Heart left ventricle (tissue), 16 donors: ENCODE measurements at regions of chr18 and their contacts with region 1.

Region 1: GRCh38 chr18:49561289-49562193 is at the start of gene LIPG:
- DNase-seq: peak in 4 of 5 donors; percentile 10 to 69 (median 36)
- ATAC-seq: peak in 3 of 4 donors; percentile 35 to 72 (median 45)
- H3K4me3 ChIP-seq: peak within 1 kb of the TSS; percentile 11 to 55 (median 40)
- H3K27ac ChIP-seq: no peak within 1 kb of the TSS
- H3K4me1 ChIP-seq: peaks cover 3 to 35% (median 21%) of the 10 kb centered on the region in 12 donors
- H3K27me3 ChIP-seq: peaks cover 12 to 53% (median 38%) of the 10 kb centered on the region in 9 donors
- CTCF ChIP-seq: no peak
- POLR2A ChIP-seq: no peak
- total RNA-seq, gene LIPG: 0.20 to 12.1 (median 1.1) TPM in 6 of 9 donors, not detected in the others

Region 2: GRCh38 chr18:49628881-49629795 is 67.6 kb after region 1 on chr18:
- intact Hi-C with region 1: loop called in 1 of 10 experiments (anchors 10 kb)
- DNase-seq: peak in 3 of 5 donors; percentile 42 to 76 (median 45)
- ATAC-seq: peak in 2 of 4 donors; percentile 47 to 68
- H3K4me3 ChIP-seq: no peak overlapping the region
- H3K27ac ChIP-seq: no peak overlapping the region
- H3K4me1 ChIP-seq: peaks cover 0 to 5% (median 0%) of the 10 kb centered on the region in 12 donors
- H3K27me3 ChIP-seq: peaks cover 0 to 22% (median 0%) of the 10 kb centered on the region in 9 donors
- CTCF ChIP-seq: peak in 5 of 12 donors; percentile 8 to 30 (median 15)
- POLR2A ChIP-seq: no peak

Region 3: DNA sequence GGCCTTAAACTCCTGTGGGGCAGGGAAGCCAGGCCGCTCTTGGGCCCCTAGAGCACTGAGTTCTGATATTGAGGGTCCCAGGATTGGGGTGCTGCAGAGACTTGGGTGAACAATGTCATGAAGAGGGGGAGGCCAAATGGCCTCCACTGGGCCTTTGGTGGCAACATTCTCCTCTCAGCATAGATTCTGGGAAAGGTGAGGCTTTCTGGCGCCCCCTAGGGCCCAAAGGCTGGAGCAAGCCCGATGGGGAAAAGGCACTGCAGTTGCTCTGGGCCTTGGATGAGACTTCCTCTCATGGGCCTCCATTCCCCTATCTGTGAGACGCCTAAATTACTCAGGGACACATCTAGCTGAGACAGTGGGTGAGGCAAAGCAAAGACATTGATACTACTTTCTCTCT is 167.0 kb after region 1 on chr18:
- intact Hi-C with region 1: loop called in 2 of 10 experiments (anchors 10 kb)
- DNase-seq: peak in 2 of 5 donors; percentile 32 to 68
- ATAC-seq: no peak
- H3K4me3 ChIP-seq: no peak overlapping the region
- H3K27ac ChIP-seq: no peak overlapping the region
- H3K4me1 ChIP-seq: peaks cover 0 to 42% (median 6%) of the 10 kb centered on the region in 12 donors
- H3K27me3 ChIP-seq: no peaks in the 10 kb centered on the region
- CTCF ChIP-seq: peak; percentile 18 to 64 (median 46)
- POLR2A ChIP-seq: no peak

Region 4: DNA sequence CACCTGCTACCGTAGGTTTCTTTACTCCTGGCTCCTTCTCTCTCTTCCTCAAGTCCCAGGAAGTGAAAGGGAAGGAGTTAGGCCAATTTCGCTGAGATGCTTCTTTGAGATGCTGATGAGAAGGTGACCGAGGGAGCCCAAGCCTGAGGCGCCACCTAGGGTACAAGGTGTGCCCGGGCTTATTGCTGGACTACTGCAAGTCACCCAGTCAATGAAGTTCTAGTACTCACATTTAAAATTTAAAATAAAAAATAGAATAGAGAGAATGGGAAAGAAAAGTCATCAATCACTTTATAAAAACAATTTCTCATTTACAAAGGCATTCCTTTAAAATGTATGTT is 206.5 kb after region 1 on chr18:
- intact Hi-C with region 1: loop called in 8 of 10 experiments (anchors 1 to 10 kb)
- DNase-seq: peak in 2 of 5 donors; percentile 30 to 50
- ATAC-seq: peak; percentile 51 to 74 (median 64)
- H3K4me3 ChIP-seq: no peak overlapping the region
- H3K27ac ChIP-seq: no peak overlapping the region
- H3K4me1 ChIP-seq: no peaks in the 10 kb centered on the region
- H3K27me3 ChIP-seq: no peaks in the 10 kb centered on the region
- CTCF ChIP-seq: peak; percentile 20 to 60 (median 45)
- POLR2A ChIP-seq: no peak

Region 5: GRCh38 chr18:49784427-49785185 is 223.1 kb after region 1 on chr18:
- intact Hi-C with region 1: loop called in 3 of 10 experiments (anchors 1 to 10 kb)
- DNase-seq: no peak
- ATAC-seq: peak in 2 of 4 donors; percentile 28 to 36
- H3K4me3 ChIP-seq: no peak overlapping the region
- H3K27ac ChIP-seq: peak overlapping the region in 2 of 12 donors; percentile 35 to 44
- H3K4me1 ChIP-seq: peaks cover 0 to 10% (median 0%) of the 10 kb centered on the region in 12 donors
- H3K27me3 ChIP-seq: no peaks in the 10 kb centered on the region
- CTCF ChIP-seq: peak in 6 of 12 donors; percentile 12 to 39 (median 26)
- POLR2A ChIP-seq: no peak